ENCODE measurements at regions of chr11 and their contacts with region 1.

Region 1: DNA sequence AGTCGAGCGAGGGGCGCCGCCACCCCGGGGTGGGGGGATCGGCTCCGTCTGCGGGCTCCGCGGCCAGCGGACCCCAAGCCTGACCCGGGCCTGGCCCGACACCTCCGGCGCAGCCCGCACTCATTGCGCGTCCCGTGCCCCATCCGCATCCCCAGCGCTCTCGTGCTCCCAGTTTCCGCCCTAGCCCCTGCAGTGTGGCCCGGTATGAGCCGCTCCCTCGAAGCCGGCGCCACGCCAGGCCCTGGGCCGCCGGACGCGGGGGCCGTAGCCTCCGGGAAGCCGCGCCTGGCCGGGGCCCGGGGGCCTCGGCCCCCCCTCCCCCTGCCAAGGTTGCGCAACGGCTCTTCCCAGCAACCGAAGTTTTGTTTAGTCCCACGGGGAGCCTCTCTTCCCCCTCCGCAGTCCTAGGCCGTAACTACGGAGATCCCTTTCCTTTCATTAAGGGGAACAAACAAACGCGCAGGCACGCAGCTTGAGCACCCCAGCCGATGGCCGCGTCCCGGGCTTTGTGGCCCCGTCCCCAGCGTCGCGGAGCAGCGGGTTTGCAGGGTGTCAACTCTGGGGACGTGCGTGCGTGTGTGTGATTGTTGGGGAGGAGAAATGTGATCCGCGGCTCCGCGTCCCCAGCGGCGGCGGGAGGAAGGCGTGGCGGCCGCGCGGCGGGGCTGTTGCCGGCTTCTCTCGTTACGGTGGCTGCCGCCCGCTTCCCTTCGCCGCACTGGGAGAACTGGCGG is 883 bp downstream of the HIPK3 start:
- DNase-seq: peak; percentile 73 to 87 (median 78)
- ATAC-seq: peak; percentile 77
- H3K4me3 ChIP-seq: peak overlapping the region; percentile 96
- H3K27ac ChIP-seq: peak overlapping the region; percentile 94
- H3K4me1 ChIP-seq: peaks cover 8 to 18% of the 10 kb centered on the region in 2 experiments
- H3K27me3 ChIP-seq: no peaks in the 10 kb centered on the region
- CTCF ChIP-seq: peak; percentile 15 to 46 (median 23); a peak in 3 of 6 replicates
- EP300 ChIP-seq: no peak
- POLR2A ChIP-seq: peak; percentile 78
- RAD21 ChIP-seq: 0 out of 4 replicates have a peak, but pooled peaks of 1 of the 2 experiments have one; percentile 18

Region 2: GRCh38 chr11:33168709-33169200 is 89.3 kb before region 1 on chr11:
- CTCF ChIA-PET with region 1: interaction called, 6 read pairs
- POLR2A ChIA-PET with region 1: no interaction called
- in situ Hi-C with region 1: no loop called
- intact Hi-C with region 1: loop called (anchors 2 kb)
- DNase-seq: no peak
- ATAC-seq: peak; percentile 56; the same call in 2 of the 3 replicates
- H3K4me3 ChIP-seq: no peak overlapping the region
- H3K27ac ChIP-seq: peak overlapping the region; percentile 21; the same call in 1 of the 3 replicates
- H3K4me1 ChIP-seq: no peaks in the 10 kb centered on the region; a peak in 1 of 5 replicates
- H3K27me3 ChIP-seq: no peaks in the 10 kb centered on the region
- CTCF ChIP-seq: no peak
- EP300 ChIP-seq: no peak
- POLR2A ChIP-seq: no peak
- RAD21 ChIP-seq: no peak

Region 3: DNA sequence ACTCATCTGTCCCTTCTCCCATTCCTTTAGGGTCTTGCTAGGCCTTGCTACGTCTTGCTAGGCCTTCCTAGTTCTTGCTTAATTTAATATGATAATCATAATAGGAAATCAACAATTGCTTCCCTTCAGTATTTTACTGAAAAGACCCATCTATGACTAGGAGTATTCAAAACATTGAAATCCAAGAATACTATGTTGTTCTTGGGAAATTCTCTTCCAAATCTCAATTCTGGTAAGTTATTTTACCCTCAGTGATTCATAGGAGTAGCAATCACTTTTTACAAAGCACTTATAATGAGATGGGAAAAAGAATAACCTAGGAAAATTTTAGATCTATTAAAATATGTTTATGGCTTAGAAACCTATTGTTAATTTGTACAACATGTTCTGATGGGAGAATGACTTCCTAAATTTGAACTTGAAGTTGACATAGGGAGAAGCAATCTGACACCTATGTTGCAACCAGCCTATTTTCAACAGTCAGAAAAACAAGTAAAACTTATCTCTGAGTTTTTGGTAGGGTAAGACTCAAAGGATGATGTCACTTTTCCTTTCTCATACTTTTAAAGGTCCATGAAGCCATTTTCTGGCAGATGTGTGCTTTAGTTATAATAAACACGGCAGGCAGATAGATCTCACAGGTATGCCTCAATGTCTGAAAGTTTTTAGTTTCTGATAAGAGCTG is 30.3 kb before region 1 on chr11:
- CTCF ChIA-PET with region 1: no interaction called
- POLR2A ChIA-PET with region 1: no interaction called
- in situ Hi-C with region 1: no loop called
- intact Hi-C with region 1: no loop called
- DNase-seq: peak in 1 of 4 experiments; percentile 13
- ATAC-seq: peak; percentile 76
- H3K4me3 ChIP-seq: no peak overlapping the region
- H3K27ac ChIP-seq: peak overlapping the region; percentile 2; the same call in 1 of the 3 replicates
- H3K4me1 ChIP-seq: no peaks in the 10 kb centered on the region; a peak in 2 of 5 replicates
- H3K27me3 ChIP-seq: no peaks in the 10 kb centered on the region
- CTCF ChIP-seq: no peak
- EP300 ChIP-seq: no peak
- POLR2A ChIP-seq: no peak
- RAD21 ChIP-seq: no peak

Region 4: DNA sequence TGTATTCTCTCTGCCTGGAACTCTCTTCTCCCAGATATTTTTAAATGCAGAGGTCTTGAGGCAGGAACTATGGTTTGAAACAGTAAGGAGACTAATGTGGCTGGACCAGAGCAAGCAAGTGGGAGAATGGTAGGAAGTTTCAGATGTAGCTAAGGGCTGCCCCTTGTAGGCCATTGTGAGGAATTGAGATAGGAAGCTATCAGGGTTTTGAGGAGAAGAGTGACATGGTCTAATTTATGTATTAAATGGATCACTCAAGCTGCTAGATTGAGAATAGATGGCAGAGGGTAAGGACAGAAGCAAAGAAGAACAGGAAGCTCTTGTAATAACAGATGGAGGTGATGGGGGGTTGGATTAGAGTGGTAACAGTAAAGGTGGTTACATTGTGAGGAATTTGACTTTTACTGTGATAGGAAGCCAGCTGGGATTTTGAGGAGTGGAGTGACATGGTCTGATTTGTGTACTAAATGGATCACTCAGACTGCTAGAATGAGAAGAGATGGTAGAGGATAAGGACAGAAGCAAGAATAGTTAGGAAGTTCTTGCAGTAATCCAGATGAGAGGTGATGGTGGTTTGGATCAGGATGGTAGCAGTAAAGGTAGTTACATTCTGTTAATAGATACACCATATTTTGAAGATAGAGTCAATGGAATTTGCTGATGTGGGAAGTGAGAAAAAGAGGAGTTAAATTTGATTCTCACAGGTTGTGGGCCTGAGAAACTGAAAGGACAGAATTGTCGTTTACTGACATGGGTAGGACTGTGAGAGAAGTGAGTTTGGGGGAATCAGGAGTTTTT is 62.2 kb after region 1 on chr11:
- CTCF ChIA-PET with region 1: interaction called, 3 read pairs
- POLR2A ChIA-PET with region 1: no interaction called
- in situ Hi-C with region 1: no loop called
- intact Hi-C with region 1: loop called (anchors 2 kb)
- DNase-seq: peak in 1 of 4 experiments; percentile 30
- ATAC-seq: peak; percentile 74
- H3K4me3 ChIP-seq: no peak overlapping the region
- H3K27ac ChIP-seq: no peak overlapping the region
- H3K4me1 ChIP-seq: peaks cover 5 to 14% of the 10 kb centered on the region in 2 experiments; a peak in 4 of 5 replicates
- H3K27me3 ChIP-seq: no peaks in the 10 kb centered on the region
- CTCF ChIP-seq: peak; percentile 6 to 44 (median 26); a peak in 3 of 6 replicates
- EP300 ChIP-seq: no peak
- POLR2A ChIP-seq: no peak
- RAD21 ChIP-seq: peak; percentile 29 to 56; a peak in 3 of 4 replicates